A673 (cell line): ENCODE measurements at regions of chr6 and their contacts with region 1.

Region 1: DNA sequence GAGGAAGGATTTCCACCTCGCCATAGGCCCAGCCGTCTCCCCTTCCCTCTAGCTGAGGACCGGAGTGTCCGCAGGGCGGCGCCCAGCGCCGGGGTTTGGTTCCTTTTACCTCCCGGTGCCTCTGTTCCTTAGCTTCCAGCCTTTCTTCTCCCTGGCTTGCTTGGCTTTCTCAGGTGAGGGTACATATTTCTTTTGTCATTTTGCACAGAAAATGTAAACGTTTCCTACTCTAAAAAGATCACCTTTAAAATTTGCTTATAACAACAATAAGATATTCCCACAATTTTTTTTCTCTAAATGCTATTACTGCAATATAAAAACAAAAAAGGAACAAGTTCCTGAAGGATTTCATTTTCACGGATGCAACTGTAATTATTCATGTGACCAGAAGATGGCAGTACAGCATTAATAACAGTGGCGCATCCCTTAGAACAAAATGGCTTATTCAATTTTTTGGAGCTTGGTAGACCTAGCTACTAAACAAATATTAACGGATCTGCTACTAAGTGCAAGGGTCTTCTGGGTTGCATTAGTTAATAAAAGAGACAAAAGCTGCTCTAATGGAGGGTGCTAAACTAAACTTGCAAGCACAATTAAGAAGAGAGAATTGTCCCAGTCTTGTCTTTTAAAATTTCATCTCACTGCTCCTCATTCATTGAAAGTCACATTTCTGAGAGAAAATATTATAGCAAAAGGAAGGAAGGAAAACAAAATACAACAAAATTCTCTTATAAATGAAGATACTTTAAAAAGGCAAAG is 172.9 kb downstream of the ADGRG6 start:
- DNase-seq: peak; percentile 65
- H3K4me3 ChIP-seq: no peak overlapping the region
- H3K27ac ChIP-seq: no peak overlapping the region
- H3K4me1 ChIP-seq: peaks cover 2% of the 10 kb centered on the region
- H3K27me3 ChIP-seq: no peaks in the 10 kb centered on the region
- CTCF ChIP-seq: peak; percentile 78

Region 2: DNA sequence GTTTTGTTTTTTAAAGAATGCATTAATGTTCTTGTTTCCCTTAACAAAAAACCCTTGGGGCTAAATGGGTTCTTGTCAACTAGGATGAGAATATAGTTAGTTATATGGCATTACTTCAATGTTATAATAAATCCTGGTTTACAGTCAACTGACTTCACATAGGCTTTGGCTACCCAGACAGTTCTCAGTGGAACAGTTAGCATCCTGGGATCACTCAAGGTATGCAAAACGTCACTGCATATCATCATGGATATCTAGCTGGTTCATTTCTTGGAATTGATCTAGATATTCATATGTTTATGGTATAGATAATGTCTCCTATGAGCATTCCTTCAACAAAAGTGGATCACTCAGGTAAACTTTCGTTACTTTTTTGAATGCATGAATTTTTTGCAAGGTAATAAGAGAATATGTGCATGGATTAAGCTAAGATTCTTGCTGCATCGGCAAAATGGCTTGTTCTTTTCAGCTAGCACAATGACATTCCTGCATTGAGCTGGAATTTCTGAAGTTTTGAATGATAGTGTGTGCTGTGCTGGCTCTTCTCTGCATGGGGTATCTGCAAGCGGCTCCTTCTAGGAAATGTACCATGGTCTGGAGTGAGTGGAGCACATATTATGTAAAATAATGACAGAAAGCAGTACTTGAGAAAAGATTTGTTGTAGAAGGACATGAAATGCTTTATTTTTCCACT is 34.0 kb before region 1 on chr6:
- CTCF ChIA-PET with region 1: no interaction called
- POLR2A ChIA-PET with region 1: no interaction called
- intact Hi-C with region 1: no loop called
- DNase-seq: peak; percentile 33
- H3K4me3 ChIP-seq: no peak overlapping the region
- H3K27ac ChIP-seq: no peak overlapping the region
- H3K4me1 ChIP-seq: peaks cover 17% of the 10 kb centered on the region
- H3K27me3 ChIP-seq: no peaks in the 10 kb centered on the region
- CTCF ChIP-seq: no peak

Region 3: GRCh38 chr6:142537612-142538478 is 63.1 kb after region 1 on chr6:
- CTCF ChIA-PET with region 1: interaction called, 8 read pairs
- POLR2A ChIA-PET with region 1: no interaction called
- intact Hi-C with region 1: loop called (anchors 2 kb)
- DNase-seq: peak; percentile 73
- H3K4me3 ChIP-seq: no peak overlapping the region
- H3K27ac ChIP-seq: no peak overlapping the region
- H3K4me1 ChIP-seq: no peaks in the 10 kb centered on the region
- H3K27me3 ChIP-seq: no peaks in the 10 kb centered on the region
- CTCF ChIP-seq: peak; percentile 74

Region 4: GRCh38 chr6:142566628-142567396 is 92.1 kb after region 1 on chr6:
- CTCF ChIA-PET with region 1: interaction called, 10 read pairs
- POLR2A ChIA-PET with region 1: no interaction called
- intact Hi-C with region 1: no loop called
- DNase-seq: peak; percentile 77
- H3K4me3 ChIP-seq: no peak overlapping the region
- H3K27ac ChIP-seq: no peak overlapping the region
- H3K4me1 ChIP-seq: no peaks in the 10 kb centered on the region
- H3K27me3 ChIP-seq: peaks cover 3% of the 10 kb centered on the region
- CTCF ChIP-seq: peak; percentile 90

Region 5: DNA sequence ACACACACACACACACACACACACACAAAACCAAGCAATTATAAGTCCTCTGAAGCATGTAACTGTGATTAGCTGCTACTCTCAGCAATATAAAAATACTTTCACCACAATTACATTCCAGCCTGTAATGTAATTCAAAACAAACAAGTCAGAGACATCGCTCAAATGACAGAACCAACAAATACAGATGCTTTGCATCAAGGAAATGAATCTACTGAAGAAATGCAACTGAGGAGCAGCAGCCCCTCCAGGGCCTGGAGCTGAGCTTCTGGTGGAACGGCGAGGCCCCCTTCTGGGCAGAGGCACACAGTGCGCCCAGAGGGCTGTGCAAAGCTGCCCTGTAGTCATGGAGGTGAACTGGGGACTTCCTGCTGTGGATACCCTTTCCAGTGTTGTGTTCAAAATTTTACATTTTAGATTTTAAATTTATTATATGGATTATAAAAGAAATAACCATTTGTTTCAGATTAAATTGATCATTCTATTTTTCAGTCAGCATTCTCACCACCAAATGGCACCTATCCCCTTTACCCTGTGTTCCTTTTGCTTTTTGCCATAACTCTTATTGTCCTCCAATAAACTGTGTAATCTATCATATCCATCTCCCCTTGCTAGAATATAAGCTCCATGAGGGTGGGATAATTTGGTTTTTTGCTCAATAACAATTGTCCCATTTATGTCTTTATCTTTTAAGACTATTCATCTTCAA is 952.6 kb after region 1 on chr6:
- CTCF ChIA-PET with region 1: interaction called, 11 read pairs
- POLR2A ChIA-PET with region 1: no interaction called
- intact Hi-C with region 1: loop called (anchors 1 kb)
- DNase-seq: peak; percentile 73
- H3K4me3 ChIP-seq: no peak overlapping the region
- H3K27ac ChIP-seq: no peak overlapping the region
- H3K4me1 ChIP-seq: no peaks in the 10 kb centered on the region
- H3K27me3 ChIP-seq: no peaks in the 10 kb centered on the region
- CTCF ChIP-seq: peak; percentile 94

Region 6: GRCh38 chr6:144013486-144013909 is 1538.8 kb after region 1 on chr6:
- CTCF ChIA-PET with region 1: no interaction called
- POLR2A ChIA-PET with region 1: no interaction called
- intact Hi-C with region 1: loop called (anchors 10 kb)
- DNase-seq: peak; percentile 84
- H3K4me3 ChIP-seq: no peak overlapping the region
- H3K27ac ChIP-seq: no peak overlapping the region
- H3K4me1 ChIP-seq: no peaks in the 10 kb centered on the region
- H3K27me3 ChIP-seq: peaks cover 5% of the 10 kb centered on the region
- CTCF ChIP-seq: peak; percentile 87